ENCODE measurements at regions of chr13 and their contacts with region 1.

Region 1: DNA sequence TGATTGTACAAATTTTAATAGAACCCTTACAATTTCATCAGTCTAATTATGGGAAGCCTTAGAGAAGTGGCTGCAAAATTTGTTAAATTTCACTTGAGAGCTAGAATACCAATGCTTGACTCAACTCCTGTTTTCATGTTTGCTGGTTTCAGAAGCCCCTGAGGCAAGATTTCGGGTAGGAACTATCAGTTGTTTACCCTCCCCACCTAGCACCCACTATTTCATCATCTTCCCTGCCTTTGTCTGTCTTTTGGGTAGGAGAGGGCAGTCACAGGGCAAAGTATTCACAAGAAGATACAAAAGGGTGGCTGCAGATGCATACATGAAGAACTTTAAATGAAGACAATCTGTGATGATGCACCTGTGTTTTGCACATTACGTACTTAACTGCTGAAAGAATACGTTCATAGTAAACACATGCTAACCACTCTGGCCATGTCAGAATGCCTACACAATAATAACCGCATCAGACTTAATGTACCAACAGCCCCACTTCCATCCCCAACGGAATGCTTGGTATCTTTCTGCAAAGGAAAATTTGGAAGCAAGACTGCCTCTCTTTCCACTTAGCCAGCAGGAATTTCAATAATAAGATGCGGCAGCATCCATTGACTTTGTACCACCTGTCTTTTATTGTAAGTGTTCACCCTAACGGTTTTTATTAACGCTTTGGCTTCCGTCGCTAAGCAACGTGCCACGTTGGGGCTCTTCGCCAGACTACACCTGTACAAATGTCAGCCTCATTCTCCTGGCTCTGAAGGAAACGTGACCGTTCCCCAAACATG is 30.4 kb downstream of the TPT1 start:
- DNase-seq: no peak
- H3K4me3 ChIP-seq: no peak overlapping the region
- H3K27ac ChIP-seq: no peak overlapping the region
- H3K27me3 ChIP-seq: no peaks in the 10 kb centered on the region
- CTCF ChIP-seq: no peak

Region 2: DNA sequence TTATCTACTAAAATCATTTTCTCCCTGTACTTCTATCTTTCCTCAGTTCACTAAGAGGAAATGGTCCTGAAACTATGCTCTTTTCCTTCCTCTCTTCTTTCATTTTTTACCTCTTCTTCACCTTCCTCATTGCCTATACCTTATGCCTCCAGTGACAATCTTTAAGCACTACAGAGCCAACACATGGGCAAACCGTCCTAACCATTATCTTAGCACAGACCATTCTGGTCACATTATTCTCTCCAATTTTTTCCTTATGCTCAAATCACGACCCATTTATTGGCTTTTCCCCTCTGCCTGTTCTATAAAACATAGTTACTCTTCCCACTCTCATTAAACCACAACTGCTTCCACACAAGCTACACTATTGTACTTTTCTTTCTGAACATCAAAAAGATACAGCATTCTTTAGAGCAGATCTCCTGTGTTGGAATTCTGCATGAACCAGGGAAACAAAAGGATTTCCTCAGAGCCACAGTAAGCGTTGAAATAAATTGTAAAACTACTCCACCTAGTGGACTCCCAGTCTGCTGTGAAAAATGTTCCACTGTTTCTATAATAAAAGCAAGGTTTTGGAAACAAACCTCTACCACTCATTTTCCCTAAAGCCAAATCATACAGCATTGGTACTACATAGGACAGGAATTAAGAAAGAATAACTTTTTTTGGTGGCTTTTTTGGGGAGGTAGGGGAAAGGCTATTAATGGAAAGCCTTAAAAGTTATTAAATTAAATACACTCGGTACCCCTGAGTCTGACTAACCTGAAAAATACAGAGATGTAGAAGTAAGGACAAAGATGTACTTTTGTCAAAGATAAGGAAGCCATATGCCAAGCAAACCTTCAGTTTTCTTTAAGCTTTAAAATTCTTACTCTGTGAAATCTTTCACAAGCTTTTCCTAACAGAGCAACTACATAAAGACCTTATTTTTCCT is 340.7 kb before region 1 on chr13:
- CTCF ChIA-PET with region 1: interaction called, 14 read pairs
- POLR2A ChIA-PET with region 1: no interaction called
- DNase-seq: peak; percentile 34
- H3K4me3 ChIP-seq: no peak overlapping the region
- H3K27ac ChIP-seq: no peak overlapping the region
- H3K27me3 ChIP-seq: no peaks in the 10 kb centered on the region
- CTCF ChIP-seq: peak; percentile 73

Region 3: DNA sequence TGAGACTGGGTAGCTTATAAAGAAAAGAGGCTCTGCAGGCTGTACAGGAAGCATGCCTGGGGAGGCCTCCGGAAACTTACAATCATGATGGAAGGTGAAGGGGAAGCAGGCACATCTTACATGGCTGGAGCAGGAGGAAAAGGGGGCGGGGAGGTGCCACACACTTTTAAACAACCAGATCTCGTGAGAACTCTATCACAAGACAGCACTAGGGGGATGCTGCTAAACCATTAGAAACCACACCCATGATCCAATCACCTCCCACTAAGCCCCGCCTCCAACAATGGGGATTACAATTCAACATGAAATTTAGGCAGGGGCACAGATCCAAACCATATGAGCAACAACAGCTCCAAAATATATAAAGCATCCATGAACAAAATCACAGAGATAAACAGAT is 236.7 kb before region 1 on chr13:
- CTCF ChIA-PET with region 1: interaction called, 11 read pairs
- POLR2A ChIA-PET with region 1: no interaction called
- DNase-seq: no peak
- H3K4me3 ChIP-seq: no peak overlapping the region
- H3K27ac ChIP-seq: no peak overlapping the region
- H3K27me3 ChIP-seq: no peaks in the 10 kb centered on the region
- CTCF ChIP-seq: no peak

Region 4: GRCh38 chr13:45219938-45220375 is 90.6 kb before region 1 on chr13:
- CTCF ChIA-PET with region 1: interaction called, 10 read pairs
- POLR2A ChIA-PET with region 1: no interaction called
- DNase-seq: no peak
- H3K4me3 ChIP-seq: no peak overlapping the region
- H3K27ac ChIP-seq: no peak overlapping the region
- H3K27me3 ChIP-seq: no peaks in the 10 kb centered on the region
- CTCF ChIP-seq: no peak

Region 5: DNA sequence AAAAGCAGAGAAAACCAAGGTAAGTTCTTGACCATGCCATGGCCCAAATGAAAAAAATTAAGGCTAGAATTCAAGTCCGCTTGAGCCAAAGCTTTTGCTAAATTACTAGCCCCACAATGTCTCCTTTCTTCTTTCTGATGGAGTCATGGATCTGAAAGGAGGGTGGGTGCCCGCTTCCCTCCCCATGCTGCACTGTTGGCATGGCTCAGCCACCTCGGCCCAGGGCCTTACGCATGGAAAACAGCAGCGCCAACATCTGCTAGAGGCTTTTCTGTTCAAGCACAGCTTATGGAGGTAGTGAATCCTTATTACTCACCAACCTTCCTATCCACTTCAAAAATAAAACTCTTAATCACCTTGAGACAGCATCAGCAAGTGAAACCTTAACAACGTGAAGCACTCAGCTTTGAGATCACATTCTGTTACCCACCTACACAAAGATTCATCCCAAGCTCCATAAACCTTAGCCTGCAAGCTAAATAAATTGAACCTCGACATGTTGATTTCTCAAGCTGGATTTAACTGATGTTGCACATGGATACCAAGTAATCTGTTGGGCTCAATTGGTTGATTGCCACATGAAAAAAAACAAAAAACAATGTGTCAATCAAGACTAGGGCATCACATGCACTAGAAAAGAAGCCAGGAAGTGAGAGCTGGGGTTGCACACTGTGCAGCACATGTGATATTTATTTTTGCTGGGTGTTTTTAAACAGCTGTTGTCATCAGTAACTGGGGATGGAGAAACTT is 12.9 kb before region 1 on chr13:
- CTCF ChIA-PET with region 1: interaction called, 17 read pairs
- POLR2A ChIA-PET with region 1: no interaction called
- DNase-seq: no peak
- H3K4me3 ChIP-seq: no peak overlapping the region
- H3K27ac ChIP-seq: no peak overlapping the region
- H3K27me3 ChIP-seq: no peaks in the 10 kb centered on the region
- CTCF ChIP-seq: no peak

Region 6: GRCh38 chr13:45909673-45910072 is 599.1 kb after region 1 on chr13:
- CTCF ChIA-PET with region 1: no interaction called
- POLR2A ChIA-PET with region 1: no interaction called
- DNase-seq: no peak
- H3K4me3 ChIP-seq: no peak overlapping the region
- H3K27ac ChIP-seq: no peak overlapping the region
- H3K27me3 ChIP-seq: peaks cover 7% of the 10 kb centered on the region
- CTCF ChIP-seq: no peak